ENCODE measurements at regions of chr1 and their contacts with region 1.

Region 1: DNA sequence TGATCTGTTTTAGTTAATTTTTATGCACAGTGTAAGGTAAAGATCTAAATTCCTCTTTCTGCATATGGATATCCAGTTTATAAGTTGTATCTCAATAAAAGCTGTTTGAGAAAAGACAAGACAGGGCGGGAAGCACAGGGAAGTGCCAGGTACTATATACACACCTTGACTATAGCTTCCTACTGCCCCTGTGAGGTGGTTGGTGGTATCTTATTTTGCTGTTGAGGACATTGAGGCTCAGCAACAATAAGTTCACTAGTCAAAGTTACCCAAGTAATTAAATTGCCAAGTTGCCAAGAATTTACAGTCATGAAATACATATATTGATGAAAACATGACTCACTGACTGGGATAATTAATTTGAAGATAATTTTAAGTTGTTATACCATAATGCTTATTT is 109.1 kb downstream of the CD247 start:
- DNase-seq: no peak
- H3K4me3 ChIP-seq: no peak overlapping the region
- H3K27ac ChIP-seq: no peak overlapping the region
- H3K4me1 ChIP-seq: peaks cover 10% of the 10 kb centered on the region
- H3K27me3 ChIP-seq: no peaks in the 10 kb centered on the region
- CTCF ChIP-seq: peak; percentile 54; the same call in 1 of the 2 replicates

Region 2: DNA sequence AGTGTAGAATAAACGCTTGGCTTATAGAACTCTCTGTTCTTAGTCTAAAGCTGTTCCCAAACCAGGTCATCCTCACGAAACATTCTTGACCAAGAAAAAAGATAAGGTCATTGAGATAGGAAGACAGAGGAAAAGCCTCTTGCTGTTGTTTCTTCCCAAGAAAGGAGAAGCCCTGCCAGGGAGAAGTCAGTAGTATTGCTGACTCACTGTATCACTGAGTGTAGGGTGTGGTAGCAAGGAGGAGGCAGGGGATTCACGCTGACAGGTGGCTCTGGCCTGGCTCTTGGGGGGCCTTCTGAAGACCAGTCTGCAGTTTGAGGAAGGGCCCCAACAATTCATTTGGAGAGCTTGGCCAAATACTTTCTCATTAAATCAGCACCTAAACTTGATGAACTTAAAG is 11.3 kb after region 1 on chr1:
- CTCF ChIA-PET with region 1: no interaction called
- POLR2A ChIA-PET with region 1: no interaction called
- intact Hi-C with region 1: loop called (anchors 1 kb)
- DNase-seq: no peak
- H3K4me3 ChIP-seq: no peak overlapping the region
- H3K27ac ChIP-seq: 0 out of 2 replicates have a peak overlapping the region, but pooled peaks have one; percentile 11
- H3K4me1 ChIP-seq: peaks cover 6% of the 10 kb centered on the region
- H3K27me3 ChIP-seq: no peaks in the 10 kb centered on the region
- CTCF ChIP-seq: no peak

Measured in PC-9 (cell line).